Aorta (tissue), 5 donors: ENCODE measurements at regions of chr7 and their contacts with region 1.

Region 1: DNA sequence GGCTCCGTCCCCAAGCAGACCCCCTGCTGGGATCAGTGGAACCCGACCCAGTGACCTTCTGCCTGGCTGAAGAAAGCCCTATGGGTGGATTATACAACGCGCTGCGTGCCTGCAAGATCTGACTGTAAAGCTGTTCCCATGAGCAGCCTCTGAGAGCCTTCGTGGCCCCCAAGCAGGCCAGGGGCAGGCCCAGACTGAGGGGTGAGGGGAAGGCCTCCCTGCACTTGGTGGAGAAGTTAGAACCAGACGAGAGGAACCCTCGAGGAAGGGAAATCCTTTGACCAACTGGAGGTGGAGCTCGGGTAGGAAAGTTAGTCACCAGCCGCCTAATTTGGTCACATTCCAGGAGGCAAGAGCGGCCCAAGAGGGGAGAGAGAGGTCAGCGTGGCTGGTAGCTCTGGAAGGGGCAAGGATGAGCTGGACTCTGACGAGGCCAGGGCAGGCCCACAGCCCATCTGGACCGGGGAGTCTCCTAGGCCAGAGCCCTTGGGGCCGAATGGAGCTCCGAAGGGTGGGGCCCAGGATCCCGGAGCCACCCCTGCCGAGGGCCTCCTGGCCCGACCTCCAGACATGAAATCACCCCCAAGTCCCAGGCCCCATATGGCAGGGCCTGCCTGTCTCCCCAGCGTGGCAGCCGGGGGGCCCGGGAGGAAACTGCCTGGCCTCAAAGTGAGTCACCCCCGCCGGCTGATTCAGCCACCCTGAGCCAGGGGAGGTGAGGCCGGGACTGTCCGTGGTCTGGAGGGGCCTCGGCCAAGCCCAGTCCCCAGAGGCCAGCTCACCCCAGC is 23.3 kb upstream of the PDGFA start:
- DNase-seq: peak; percentile 85 to 93
- ATAC-seq: peak; percentile 63
- H3K4me3 ChIP-seq: no peak overlapping the region
- H3K27ac ChIP-seq: peak overlapping the region; percentile 53 to 58
- H3K4me1 ChIP-seq: peaks cover 0 to 3% of the 10 kb centered on the region in 2 donors
- H3K27me3 ChIP-seq: no peaks in the 10 kb centered on the region

Region 2: DNA sequence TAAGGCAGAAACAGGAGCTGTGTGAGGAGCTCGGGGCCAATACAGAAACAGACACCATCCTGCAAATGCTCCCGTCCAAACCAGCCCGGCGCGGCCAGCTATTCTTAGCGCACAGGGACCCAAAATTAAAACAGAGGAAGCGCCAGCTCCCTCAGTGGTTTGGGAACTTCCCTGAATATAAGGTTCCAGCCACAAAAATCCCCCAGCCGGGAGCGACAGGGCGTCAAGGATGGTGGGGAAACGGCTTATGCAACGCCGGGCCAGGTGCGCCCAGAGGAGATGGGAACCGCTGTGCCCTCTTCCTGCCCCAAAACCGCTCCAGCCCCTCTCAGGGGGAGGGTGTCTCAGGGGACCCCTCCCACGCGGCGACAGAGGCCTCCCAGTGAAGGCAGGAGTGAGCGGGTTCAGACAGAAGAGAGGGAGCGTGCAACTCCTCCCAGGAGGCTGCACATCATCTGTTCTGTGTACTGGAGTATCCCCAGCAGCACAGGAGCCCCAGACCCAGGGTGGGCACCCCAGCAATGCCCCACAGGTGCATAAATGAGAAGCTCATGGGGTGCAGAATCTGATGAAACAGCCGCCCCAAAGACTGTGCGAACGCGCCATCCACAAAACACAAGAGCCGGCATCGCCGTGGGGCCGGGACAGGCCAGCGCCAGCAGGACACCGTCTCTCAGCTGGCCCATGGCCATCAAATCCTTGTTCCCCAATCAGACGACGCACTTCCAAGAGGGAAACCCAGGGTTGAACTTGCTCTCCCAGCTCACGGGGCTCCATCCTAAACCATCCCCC is 50.6 kb after region 1 on chr7:
- intact Hi-C with region 1: loop called in 1 of 2 experiments (anchors 10 kb)
- DNase-seq: peak in 1 of 2 donors; percentile 72
- ATAC-seq: no peak
- H3K4me3 ChIP-seq: no peak overlapping the region
- H3K27ac ChIP-seq: peak overlapping the region in 1 of 2 donors; percentile 19
- H3K4me1 ChIP-seq: no peaks in the 10 kb centered on the region
- H3K27me3 ChIP-seq: no peaks in the 10 kb centered on the region

Region 3: DNA sequence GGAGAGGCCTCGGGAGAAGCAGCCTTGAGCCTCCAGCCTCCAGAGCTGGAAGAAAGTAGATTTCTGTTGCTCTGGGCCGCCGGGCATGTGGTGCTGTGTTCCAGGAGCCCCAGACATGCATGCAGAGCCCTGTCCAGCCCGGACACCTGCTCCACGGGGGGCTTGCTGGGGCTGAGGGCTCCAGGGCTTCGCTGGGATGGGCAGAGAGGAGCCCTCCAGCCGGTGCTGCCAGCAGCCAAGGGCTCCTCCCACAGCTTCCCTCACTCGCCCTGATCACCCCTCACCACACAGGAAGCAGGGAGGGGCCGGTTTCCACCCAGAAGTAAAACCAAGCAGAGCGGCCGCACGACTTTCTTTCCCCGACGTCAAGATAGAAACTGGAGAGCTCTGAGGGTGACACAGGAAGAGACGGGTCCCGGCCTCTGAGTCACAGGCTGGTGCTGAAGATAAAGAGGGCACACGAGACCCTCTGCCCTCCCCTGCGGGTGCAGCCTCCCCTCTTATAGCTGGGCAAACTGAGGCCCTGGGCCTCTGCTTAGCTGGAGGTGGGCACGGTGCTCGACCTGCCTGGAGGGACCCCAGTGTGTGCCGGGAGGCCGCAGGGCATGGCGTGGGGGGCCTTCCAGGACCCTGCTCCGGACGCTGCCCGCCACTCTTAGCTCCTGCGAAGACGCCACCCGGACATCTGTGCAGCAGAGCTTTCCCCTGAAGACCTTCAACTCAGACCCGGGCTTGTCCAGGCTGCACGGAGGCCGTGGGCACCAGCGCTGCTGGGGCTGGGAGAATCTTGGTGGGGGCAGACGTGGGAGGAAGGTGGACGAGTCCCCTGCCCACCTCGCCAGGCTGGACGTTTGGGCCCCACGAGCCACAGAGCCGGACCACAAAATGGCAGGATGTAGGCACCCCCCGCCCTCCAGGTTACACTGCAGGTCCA is 380.5 kb after region 1 on chr7:
- intact Hi-C with region 1: no loop called
- DNase-seq: peak; percentile 85 to 90
- ATAC-seq: peak; percentile 15
- H3K4me3 ChIP-seq: no peak overlapping the region
- H3K27ac ChIP-seq: no peak overlapping the region
- H3K4me1 ChIP-seq: no peaks in the 10 kb centered on the region
- H3K27me3 ChIP-seq: no peaks in the 10 kb centered on the region